HepG2 (cell line): ENCODE measurements at regions of chr16 and their contacts with region 1.

Region 1: GRCh38 chr16:22284637-22285036 is 12.6 kb upstream of the POLR3E start:
- DNase-seq: no peak
- ATAC-seq: no peak
- H3K4me3 ChIP-seq: no peak overlapping the region
- H3K27ac ChIP-seq: no peak overlapping the region
- H3K4me1 ChIP-seq: no peaks in the 10 kb centered on the region; the same call in 1 of the 2 replicates
- H3K27me3 ChIP-seq: no peaks in the 10 kb centered on the region
- CTCF ChIP-seq: no peak
- EP300 ChIP-seq: no peak
- POLR2A ChIP-seq: no peak
- RAD21 ChIP-seq: no peak

Region 2: GRCh38 chr16:22206013-22206841 is 78.4 kb before region 1 on chr16 and contains the start of gene EEF2K:
- CTCF ChIA-PET with region 1: no interaction called
- POLR2A ChIA-PET with region 1: no interaction called
- in situ Hi-C with region 1: no loop called
- intact Hi-C with region 1: loop called (anchors 5 kb)
- DNase-seq: peak; percentile 93
- ATAC-seq: peak; percentile 89
- H3K4me3 ChIP-seq: peak within 1 kb of the TSS; percentile 89 to 97 (median 93)
- H3K27ac ChIP-seq: peak within 1 kb of the TSS; percentile 71
- H3K4me1 ChIP-seq: peaks cover 78% of the 10 kb centered on the region
- H3K27me3 ChIP-seq: no peaks in the 10 kb centered on the region; a peak in 1 of 5 replicates
- CTCF ChIP-seq: peak; percentile 96
- EP300 ChIP-seq: peak; percentile 38 to 49; a peak in 1 of 4 replicates
- POLR2A ChIP-seq: peak; percentile 69 to 92
- RAD21 ChIP-seq: peak; percentile 96
- total RNA-seq, gene EEF2K: 14.3 and 23.8 TPM in 2 replicates

Region 3: DNA sequence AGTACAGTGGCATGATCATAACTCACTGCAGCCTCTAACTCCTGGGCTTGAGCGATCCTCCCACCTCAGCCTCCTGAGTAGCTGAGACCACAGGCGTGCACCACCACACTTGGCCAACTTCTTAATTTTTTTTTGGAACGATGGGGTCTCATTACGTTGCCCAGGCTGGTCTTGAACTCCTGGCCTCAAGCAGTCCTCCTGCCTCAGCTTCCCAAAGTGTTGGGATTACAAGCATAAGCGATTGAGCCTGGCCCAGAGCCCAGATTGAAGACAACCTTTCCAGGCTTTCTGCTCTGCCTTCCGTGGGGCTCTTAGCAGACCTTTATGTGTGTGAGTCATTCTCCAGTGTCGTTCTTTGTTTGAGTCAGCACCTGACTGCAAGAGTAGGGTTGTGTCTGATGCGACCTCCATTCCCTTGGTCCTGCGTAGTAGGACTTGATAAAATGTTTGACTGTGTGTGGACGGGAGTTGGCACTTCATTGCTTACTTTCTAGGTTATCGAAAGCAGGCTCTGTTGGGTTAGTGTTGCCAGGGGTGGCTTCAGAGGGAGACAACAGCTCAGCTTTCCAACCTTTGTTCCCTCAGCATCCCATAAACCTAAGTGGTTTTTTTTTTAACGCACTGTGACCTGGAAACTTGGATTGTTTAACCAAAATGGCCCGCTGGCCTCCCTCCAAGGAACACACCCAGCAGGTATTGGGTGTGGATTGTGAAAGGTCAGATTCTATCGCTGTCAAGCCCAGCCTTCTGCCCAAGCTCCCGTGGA is 52.2 kb before region 1 on chr16:
- CTCF ChIA-PET with region 1: no interaction called
- POLR2A ChIA-PET with region 1: no interaction called
- in situ Hi-C with region 1: no loop called
- intact Hi-C with region 1: loop called (anchors 10 kb)
- DNase-seq: peak; percentile 93
- ATAC-seq: peak; percentile 93
- H3K4me3 ChIP-seq: peak overlapping the region in 2 of 3 experiments; percentile 8 to 30; a peak in 4 of 6 replicates
- H3K27ac ChIP-seq: peak overlapping the region; percentile 81
- H3K4me1 ChIP-seq: peaks cover 18% of the 10 kb centered on the region
- H3K27me3 ChIP-seq: no peaks in the 10 kb centered on the region
- CTCF ChIP-seq: 0 out of 2 replicates have a peak, but pooled peaks have one; percentile 11
- EP300 ChIP-seq: no peak; a peak in 1 of 4 replicates
- POLR2A ChIP-seq: no peak
- RAD21 ChIP-seq: no peak; the same call in 1 of the 2 replicates